Activated CD4-positive, alpha-beta T cell treated with anti-CD3 and anti-CD28 coated beads, Interleukin-2, amount 10 ng/mL, durations not matched to agents 7 days and 5 days (primary cell): ENCODE measurements at regions of chr19 and their contacts with region 1.

Region 1: DNA sequence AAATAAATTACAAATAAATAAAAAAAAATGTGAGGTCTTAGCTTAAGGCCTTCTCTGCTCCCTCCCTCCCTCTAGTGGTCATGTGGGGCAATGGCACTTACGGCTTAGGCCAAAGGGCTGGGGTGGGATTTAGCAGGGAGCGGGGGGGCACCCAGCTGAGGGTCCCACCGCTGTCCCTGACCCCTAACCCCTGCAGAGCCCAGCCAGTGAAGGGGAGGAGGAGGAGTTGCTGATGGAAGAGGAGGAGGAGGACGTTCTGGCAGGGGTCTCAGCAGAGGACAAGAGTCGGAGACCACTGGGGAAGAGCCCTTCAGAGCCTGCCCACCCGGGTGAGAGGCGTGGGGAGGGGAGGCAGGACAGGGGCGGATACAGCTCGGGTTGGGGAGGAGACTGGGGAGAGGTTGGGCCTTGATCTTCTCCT is 9.3 kb downstream of the MPND start:
- DNase-seq: peak; percentile 71
- H3K4me3 Mint-ChIP-seq: no peak overlapping the region
- H3K27ac Mint-ChIP-seq: no peak overlapping the region
- H3K4me1 Mint-ChIP-seq: peaks cover 2% of the 10 kb centered on the region
- H3K27me3 Mint-ChIP-seq: no peaks in the 10 kb centered on the region

Region 2: GRCh38 chr19:4362861-4363510 is 10.3 kb after region 1 on chr19:
- CTCF ChIA-PET with region 1: interaction called, 14 read pairs
- POLR2A ChIA-PET with region 1: no interaction called
- DNase-seq: no peak
- H3K4me3 Mint-ChIP-seq: no peak overlapping the region
- H3K27ac Mint-ChIP-seq: peak overlapping the region; percentile 60
- H3K4me1 Mint-ChIP-seq: peaks cover 18% of the 10 kb centered on the region
- H3K27me3 Mint-ChIP-seq: no peaks in the 10 kb centered on the region

Region 3: DNA sequence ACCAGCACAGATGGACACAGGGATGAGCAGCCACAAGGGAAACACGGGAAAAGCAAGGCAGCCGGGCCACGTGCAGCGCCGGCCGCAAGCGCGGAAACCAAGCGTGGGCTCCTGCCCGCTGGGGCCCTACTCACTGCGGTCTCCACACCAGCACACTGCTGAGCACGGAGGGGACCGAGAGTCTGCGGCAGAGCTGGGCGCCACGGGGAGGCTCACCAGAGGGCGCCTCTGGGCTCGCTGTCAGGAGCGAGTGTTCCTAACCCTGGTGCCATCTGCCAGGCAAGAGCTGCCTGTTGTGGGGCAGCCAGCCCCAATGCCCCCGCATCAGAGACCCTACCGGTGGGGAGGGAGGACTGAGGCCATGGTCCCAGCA is 17.2 kb after region 1 on chr19:
- CTCF ChIA-PET with region 1: interaction called, 10 read pairs
- POLR2A ChIA-PET with region 1: no interaction called
- DNase-seq: peak; percentile 77
- H3K4me3 Mint-ChIP-seq: peak overlapping the region; percentile 62
- H3K27ac Mint-ChIP-seq: peak overlapping the region; percentile 93
- H3K4me1 Mint-ChIP-seq: peaks cover 68% of the 10 kb centered on the region
- H3K27me3 Mint-ChIP-seq: no peaks in the 10 kb centered on the region

Region 4: GRCh38 chr19:4694209-4694987 is 341.7 kb after region 1 on chr19:
- CTCF ChIA-PET with region 1: no interaction called
- POLR2A ChIA-PET with region 1: no interaction called
- DNase-seq: no peak
- H3K4me3 Mint-ChIP-seq: no peak overlapping the region
- H3K27ac Mint-ChIP-seq: no peak overlapping the region
- H3K4me1 Mint-ChIP-seq: peaks cover 3% of the 10 kb centered on the region
- H3K27me3 Mint-ChIP-seq: no peaks in the 10 kb centered on the region